ENCODE measurements at regions of chr12 and their contacts with region 1.

Region 1: DNA sequence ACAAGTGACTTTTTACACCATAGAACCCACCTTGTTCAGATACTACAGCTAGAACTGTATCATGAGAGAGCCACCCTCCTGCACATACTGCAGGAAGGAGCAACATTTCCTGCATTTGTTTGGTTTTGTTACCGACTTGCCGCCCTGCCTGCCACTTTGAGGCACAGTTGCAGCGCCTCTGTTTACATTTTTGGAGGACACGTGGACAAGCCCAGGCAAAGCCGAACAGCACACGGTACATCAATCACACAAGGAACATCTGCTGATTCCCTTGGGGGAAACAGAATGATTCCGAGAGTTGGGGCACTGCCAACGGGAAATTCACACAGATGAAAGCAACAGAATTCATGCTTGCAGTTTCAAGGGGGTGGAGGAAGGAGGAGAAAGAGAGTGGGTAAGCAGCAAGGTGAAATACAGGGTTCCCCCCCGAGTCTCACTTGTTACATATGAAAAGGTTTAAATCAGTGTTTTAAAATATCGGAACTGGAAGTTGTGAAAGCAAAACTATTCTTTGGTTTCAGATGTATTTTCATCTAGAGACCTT is 110.7 kb downstream of the BTG1 start:
- DNase-seq: peak; percentile 31
- H3K4me3 Mint-ChIP-seq: peak overlapping the region; percentile 87
- H3K27ac Mint-ChIP-seq: peak overlapping the region; percentile 90
- H3K4me1 Mint-ChIP-seq: peaks cover 64% of the 10 kb centered on the region
- H3K27me3 Mint-ChIP-seq: no peaks in the 10 kb centered on the region

Region 2: DNA sequence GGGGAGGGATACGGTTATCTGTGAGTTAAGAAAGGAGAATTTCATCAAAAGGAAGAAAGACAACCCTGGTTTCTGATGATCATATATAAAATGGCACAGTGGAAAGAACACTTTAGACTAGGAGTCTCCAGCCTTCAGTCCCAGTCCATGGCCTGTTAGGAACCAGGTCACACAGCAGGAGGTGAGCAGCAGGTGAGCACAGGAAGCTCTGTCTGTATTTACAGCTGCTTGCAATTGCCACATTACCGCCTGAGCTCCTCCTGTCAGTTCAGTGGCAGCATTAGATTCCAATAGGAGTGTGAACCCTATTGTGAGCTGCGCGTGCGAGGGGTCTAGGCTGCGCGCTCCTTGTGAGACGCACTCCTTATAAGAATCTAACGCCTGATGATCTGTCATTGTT is 27.1 kb before region 1 on chr12:
- intact Hi-C with region 1: no loop called
- DNase-seq: no peak
- H3K4me3 Mint-ChIP-seq: no peak overlapping the region
- H3K27ac Mint-ChIP-seq: no peak overlapping the region
- H3K4me1 Mint-ChIP-seq: peaks cover 16% of the 10 kb centered on the region
- H3K27me3 Mint-ChIP-seq: peaks cover 3% of the 10 kb centered on the region

Region 3: GRCh38 chr12:92047393-92047826 is 12.5 kb after region 1 on chr12:
- intact Hi-C with region 1: loop called (anchors 1 kb)
- DNase-seq: no peak
- H3K4me3 Mint-ChIP-seq: peak overlapping the region; percentile 49
- H3K27ac Mint-ChIP-seq: peak overlapping the region; percentile 75
- H3K4me1 Mint-ChIP-seq: peaks cover 88% of the 10 kb centered on the region
- H3K27me3 Mint-ChIP-seq: no peaks in the 10 kb centered on the region

Region 4: DNA sequence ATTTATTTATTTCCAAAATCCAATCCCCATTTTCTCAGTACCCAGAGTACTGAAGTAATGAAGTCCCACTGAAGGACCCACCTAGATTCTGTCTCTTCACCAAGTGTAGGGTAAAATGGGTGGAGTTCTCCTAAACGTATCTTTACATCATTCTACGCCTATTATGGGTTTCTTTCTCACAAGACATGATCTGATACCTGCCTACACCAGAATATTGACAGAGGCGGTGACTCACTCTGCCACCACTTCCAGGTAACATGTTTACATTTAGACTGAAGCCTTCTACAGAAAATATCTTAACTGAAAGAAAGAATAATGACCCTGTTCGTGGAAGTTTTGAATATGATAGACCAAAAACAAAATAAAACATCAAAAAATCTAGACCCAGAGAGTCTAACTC is 20.9 kb after region 1 on chr12:
- intact Hi-C with region 1: loop called (anchors 2 kb)
- DNase-seq: peak; percentile 37
- H3K4me3 Mint-ChIP-seq: peak overlapping the region; percentile 58
- H3K27ac Mint-ChIP-seq: peak overlapping the region; percentile 90
- H3K4me1 Mint-ChIP-seq: peaks cover 67% of the 10 kb centered on the region
- H3K27me3 Mint-ChIP-seq: no peaks in the 10 kb centered on the region

Region 5: GRCh38 chr12:92170050-92170449 is 135.1 kb after region 1 on chr12:
- intact Hi-C with region 1: no loop called
- DNase-seq: no peak
- H3K4me3 Mint-ChIP-seq: no peak overlapping the region
- H3K27ac Mint-ChIP-seq: no peak overlapping the region
- H3K4me1 Mint-ChIP-seq: peaks cover 15% of the 10 kb centered on the region
- H3K27me3 Mint-ChIP-seq: peaks cover 2% of the 10 kb centered on the region

Region 6: GRCh38 chr12:92185052-92185451 is 150.1 kb after region 1 on chr12:
- intact Hi-C with region 1: loop called (anchors 1 kb)
- DNase-seq: peak; percentile 46
- H3K4me3 Mint-ChIP-seq: peak overlapping the region; percentile 19
- H3K27ac Mint-ChIP-seq: peak overlapping the region; percentile 70
- H3K4me1 Mint-ChIP-seq: peaks cover 63% of the 10 kb centered on the region
- H3K27me3 Mint-ChIP-seq: no peaks in the 10 kb centered on the region

Region 7: GRCh38 chr12:93191956-93192355 is 1157.0 kb after region 1 on chr12:
- intact Hi-C with region 1: no loop called
- DNase-seq: no peak
- H3K4me3 Mint-ChIP-seq: no peak overlapping the region
- H3K27ac Mint-ChIP-seq: no peak overlapping the region
- H3K4me1 Mint-ChIP-seq: no peaks in the 10 kb centered on the region
- H3K27me3 Mint-ChIP-seq: peaks cover 7% of the 10 kb centered on the region